Activated T-helper 1 cell treated with anti-CD3 and anti-CD28 coated beads, Interleukin-12 subunit alpha, Interleukin-12 subunit beta, Interleukin-2, Interleukin-4 antibody, amounts not matched to agents 30 ng/mL and 10 ng/mL and 1 ng/mL, durations not matched to agents 14 hours and 24 hours and 36 hours (primary cell): ENCODE measurements at regions of chr5 and their contacts with region 1.

Region 1: DNA sequence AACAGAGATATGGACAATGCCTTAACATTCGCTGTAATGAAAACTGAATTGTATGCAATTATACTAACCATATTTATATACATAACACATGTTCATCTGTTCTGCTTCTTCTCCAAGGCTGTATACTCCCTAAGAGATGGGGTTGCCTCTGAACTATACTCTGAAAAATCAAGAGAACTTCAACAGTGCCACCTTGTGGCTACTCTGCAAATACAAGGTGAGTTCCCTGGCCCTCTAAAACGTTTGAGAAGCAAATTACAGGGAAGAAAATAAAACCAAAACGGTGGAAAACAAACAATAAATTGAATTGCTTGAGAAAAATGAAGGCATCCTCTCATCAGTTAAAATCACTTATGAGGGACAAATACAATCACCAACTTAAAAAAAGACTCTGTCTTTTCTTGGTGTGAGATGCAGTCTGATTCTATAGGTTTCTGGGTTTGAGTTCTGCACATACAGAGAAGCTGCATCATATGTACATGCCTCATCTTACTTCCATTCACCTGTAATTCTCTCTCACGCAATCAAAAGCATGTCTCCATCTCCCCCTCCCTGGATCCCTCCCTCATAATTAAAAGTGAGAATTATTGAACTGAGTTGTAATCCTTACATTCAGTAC is 98.6 kb downstream of the FBXW11 start:
- DNase-seq: peak; percentile 33
- H3K4me3 Mint-ChIP-seq: no peak overlapping the region
- H3K27ac Mint-ChIP-seq: peak overlapping the region; percentile 89
- H3K4me1 Mint-ChIP-seq: peaks cover 45% of the 10 kb centered on the region
- H3K27me3 Mint-ChIP-seq: no peaks in the 10 kb centered on the region

Region 2: GRCh38 chr5:171387345-171387969 is 520.4 kb before region 1 on chr5 and contains the start of gene NPM1:
- intact Hi-C with region 1: loop called (anchors 1 kb)
- DNase-seq: peak; percentile 97
- H3K4me3 Mint-ChIP-seq: peak within 1 kb of the TSS; percentile 97
- H3K27ac Mint-ChIP-seq: peak within 1 kb of the TSS; percentile 98
- H3K4me1 Mint-ChIP-seq: peaks cover 43% of the 10 kb centered on the region
- H3K27me3 Mint-ChIP-seq: peaks cover 8% of the 10 kb centered on the region
- total RNA-seq, gene NPM1: 2,729 and 2,809 TPM in 2 replicates

Region 3: GRCh38 chr5:171600741-171601265 is 307.0 kb before region 1 on chr5:
- intact Hi-C with region 1: loop called (anchors 2 kb)
- DNase-seq: no peak
- H3K4me3 Mint-ChIP-seq: no peak overlapping the region
- H3K27ac Mint-ChIP-seq: no peak overlapping the region
- H3K4me1 Mint-ChIP-seq: no peaks in the 10 kb centered on the region
- H3K27me3 Mint-ChIP-seq: peaks cover 4% of the 10 kb centered on the region

Region 4: DNA sequence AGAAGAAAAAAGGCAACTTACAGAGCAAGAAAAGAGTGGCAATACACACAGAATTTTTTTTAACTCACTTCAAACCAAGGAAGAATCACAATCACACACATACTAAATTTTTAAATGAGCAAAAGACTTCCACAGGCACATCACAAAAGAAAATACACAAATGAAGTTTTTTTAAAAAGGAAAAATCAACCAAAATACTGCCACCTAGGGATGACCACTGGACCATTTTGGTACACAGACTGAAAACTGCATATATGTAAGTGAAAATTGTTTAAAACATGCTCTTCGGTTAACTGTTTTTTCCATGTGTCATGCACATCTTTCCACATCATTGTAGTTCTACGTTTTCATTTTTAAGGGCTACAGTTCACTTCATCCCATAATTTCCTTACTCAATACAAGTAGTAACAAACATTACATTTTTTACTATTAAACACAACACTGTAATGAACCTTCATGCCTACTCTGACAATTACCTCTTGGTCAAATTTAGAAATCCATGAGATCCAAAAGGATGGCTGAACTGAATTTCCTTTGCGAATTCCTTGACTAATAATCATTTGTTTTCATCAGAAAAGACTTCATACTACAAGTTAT is 19.6 kb after region 1 on chr5:
- intact Hi-C with region 1: no loop called
- DNase-seq: no peak
- H3K4me3 Mint-ChIP-seq: no peak overlapping the region
- H3K27ac Mint-ChIP-seq: no peak overlapping the region
- H3K4me1 Mint-ChIP-seq: peaks cover 22% of the 10 kb centered on the region
- H3K27me3 Mint-ChIP-seq: no peaks in the 10 kb centered on the region

Region 5: GRCh38 chr5:171961117-171961516 is 53.3 kb after region 1 on chr5:
- intact Hi-C with region 1: loop called (anchors 1 kb)
- DNase-seq: no peak
- H3K4me3 Mint-ChIP-seq: peak overlapping the region; percentile 13
- H3K27ac Mint-ChIP-seq: peak overlapping the region; percentile 76
- H3K4me1 Mint-ChIP-seq: peaks cover 81% of the 10 kb centered on the region
- H3K27me3 Mint-ChIP-seq: no peaks in the 10 kb centered on the region

Region 6: DNA sequence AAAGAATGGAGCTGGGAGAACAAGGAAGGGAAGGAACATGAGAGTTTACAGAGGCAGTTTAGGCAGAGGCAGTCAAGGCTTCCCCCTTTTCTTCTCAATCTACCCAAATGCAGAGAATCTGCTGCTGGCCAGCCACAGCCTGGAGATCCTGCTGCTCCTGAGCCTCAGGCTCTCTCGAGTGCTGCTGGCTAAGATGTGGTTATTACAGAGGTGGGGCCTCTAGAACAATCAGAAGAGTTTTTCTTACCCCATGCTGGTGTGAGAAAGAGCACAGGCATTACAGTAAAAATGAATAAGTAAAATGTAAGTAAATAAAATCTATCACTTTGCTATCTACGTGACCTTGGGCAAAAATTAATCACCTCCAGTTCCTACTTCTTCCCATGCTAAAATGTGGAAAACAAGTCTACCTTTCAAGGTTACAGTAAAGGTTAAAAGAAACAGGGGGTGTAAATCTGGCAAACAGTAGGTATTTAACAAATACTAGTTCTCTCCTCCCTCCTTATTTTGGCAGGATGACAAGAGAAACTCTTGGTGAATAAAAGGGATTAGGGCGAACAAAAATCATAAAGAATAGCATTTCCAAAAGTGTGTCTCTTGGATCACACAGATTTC is 67.5 kb after region 1 on chr5:
- intact Hi-C with region 1: no loop called
- DNase-seq: no peak
- H3K4me3 Mint-ChIP-seq: no peak overlapping the region
- H3K27ac Mint-ChIP-seq: peak overlapping the region; percentile 63
- H3K4me1 Mint-ChIP-seq: peaks cover 44% of the 10 kb centered on the region
- H3K27me3 Mint-ChIP-seq: no peaks in the 10 kb centered on the region

Region 7: DNA sequence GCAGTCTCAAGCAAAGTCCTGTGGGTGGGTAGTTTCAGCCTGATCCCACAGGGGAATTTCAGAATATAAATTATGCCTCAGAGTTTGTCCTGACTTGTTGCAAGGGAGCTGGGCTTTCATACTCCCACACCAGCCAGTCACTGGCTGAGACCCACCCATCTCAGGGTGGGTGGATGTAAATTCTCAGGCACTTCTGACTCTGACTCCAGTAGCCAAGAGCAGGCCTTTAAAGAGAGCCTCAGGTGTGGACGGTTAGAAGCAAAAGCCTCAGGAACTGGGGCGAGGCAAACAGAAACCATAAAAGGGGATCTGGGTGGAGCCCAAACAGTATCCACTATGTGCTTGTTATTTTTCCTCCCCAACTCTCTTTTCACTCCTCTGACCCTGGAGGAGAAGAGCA is 127.2 kb after region 1 on chr5:
- intact Hi-C with region 1: loop called (anchors 1 kb)
- DNase-seq: no peak
- H3K4me3 Mint-ChIP-seq: no peak overlapping the region
- H3K27ac Mint-ChIP-seq: peak overlapping the region; percentile 20
- H3K4me1 Mint-ChIP-seq: peaks cover 13% of the 10 kb centered on the region
- H3K27me3 Mint-ChIP-seq: peaks cover 2% of the 10 kb centered on the region

Region 8: GRCh38 chr5:172188033-172188892 is 280.4 kb after region 1 on chr5 and contains the start of gene STK10:
- intact Hi-C with region 1: loop called (anchors 2 kb)
- DNase-seq: peak; percentile 86
- H3K4me3 Mint-ChIP-seq: peak within 1 kb of the TSS; percentile 99
- H3K27ac Mint-ChIP-seq: peak within 1 kb of the TSS; percentile 99
- H3K4me1 Mint-ChIP-seq: peaks cover 38% of the 10 kb centered on the region
- H3K27me3 Mint-ChIP-seq: peaks cover 8% of the 10 kb centered on the region
- total RNA-seq, gene STK10: 88.6 and 91.9 TPM in 2 replicates

Region 9: DNA sequence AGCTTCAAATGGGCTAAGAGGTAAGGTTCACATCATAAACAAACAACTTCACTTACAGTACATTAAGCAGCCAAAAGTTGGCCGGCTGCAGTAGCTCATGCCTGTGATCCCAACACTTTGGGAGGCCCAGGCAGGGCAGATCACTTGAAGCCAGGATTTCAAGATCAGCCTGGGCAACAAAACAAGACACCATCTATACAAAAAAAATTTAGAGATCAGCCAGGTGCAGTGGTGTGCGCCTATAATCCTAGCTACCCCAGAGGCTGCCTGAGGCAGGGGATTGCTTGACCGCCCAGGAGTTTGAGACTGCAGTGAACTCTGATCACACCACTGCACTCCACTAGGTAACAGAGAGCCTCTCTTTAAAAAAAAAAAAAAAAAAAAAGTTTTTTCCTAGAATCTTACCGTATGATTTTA is 358.9 kb after region 1 on chr5:
- intact Hi-C with region 1: no loop called
- DNase-seq: no peak
- H3K4me3 Mint-ChIP-seq: no peak overlapping the region
- H3K27ac Mint-ChIP-seq: no peak overlapping the region
- H3K4me1 Mint-ChIP-seq: peaks cover 6% of the 10 kb centered on the region
- H3K27me3 Mint-ChIP-seq: no peaks in the 10 kb centered on the region

Region 10: DNA sequence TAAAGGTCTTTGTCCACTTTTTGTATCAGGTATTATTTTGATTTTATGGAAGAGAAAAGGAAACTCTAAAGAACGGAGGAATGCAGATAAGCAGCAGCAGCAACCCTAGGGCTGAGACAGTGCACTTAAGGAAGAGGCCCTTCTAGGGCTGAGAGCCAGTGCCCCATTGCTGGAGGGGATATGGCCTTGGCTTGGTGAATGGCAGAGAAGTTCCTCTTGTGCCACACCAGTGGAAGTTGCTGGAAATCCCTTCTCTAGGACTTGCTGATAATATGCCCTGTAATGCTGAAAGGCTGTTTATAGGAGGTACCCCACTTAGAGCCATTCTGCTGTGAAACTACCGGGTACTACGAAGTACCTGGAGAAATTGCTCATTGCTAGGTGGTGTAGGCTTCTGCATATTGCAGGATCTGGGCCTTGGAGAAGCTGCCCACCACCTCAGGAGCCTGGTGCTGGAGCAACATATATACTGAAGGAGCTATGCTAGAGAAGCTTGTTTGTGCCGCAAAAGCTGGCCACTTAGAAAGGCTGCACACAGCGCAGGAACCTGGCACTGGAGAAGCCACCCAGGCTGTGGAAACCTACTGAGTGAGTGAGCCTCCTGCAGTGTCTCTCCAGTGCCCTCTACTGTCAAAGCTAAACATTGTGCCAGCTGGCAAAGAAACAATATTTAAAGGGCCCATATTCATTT is 385.4 kb after region 1 on chr5:
- intact Hi-C with region 1: loop called (anchors 1 kb)
- DNase-seq: peak; percentile 51
- H3K4me3 Mint-ChIP-seq: no peak overlapping the region
- H3K27ac Mint-ChIP-seq: no peak overlapping the region
- H3K4me1 Mint-ChIP-seq: peaks cover 5% of the 10 kb centered on the region
- H3K27me3 Mint-ChIP-seq: peaks cover 27% of the 10 kb centered on the region